Mammary epithelial cell (primary cell): ENCODE measurements at regions of chr1 and their contacts with region 1.

Region 1: GRCh38 chr1:21508580-21509350 is 458 bp upstream of the ALPL start:
- DNase-seq: peak; percentile 21
- H3K4me3 ChIP-seq: peak overlapping the region in 2 of 3 experiments; percentile 18 to 21
- H3K27ac ChIP-seq: no peak overlapping the region
- H3K4me1 ChIP-seq: peaks cover 14% of the 10 kb centered on the region
- H3K27me3 ChIP-seq: peaks cover 13% of the 10 kb centered on the region
- CTCF ChIP-seq: peak; percentile 25 to 56

Region 2: GRCh38 chr1:21534674-21535378 is 26.1 kb after region 1 on chr1:
- CTCF ChIA-PET with region 1: interaction called, 4 read pairs
- dilution Hi-C with region 1: no loop called
- in situ Hi-C with region 1: no loop called
- intact Hi-C with region 1: loop called (anchors 2 kb)
- DNase-seq: peak; percentile 62
- H3K4me3 ChIP-seq: no peak overlapping the region
- H3K27ac ChIP-seq: no peak overlapping the region
- H3K4me1 ChIP-seq: no peaks in the 10 kb centered on the region
- H3K27me3 ChIP-seq: peaks cover 2% of the 10 kb centered on the region
- CTCF ChIP-seq: peak in 1 of 2 donors; percentile 31

Region 3: GRCh38 chr1:21573971-21574465 is 65.3 kb after region 1 on chr1:
- CTCF ChIA-PET with region 1: no interaction called
- dilution Hi-C with region 1: no loop called
- in situ Hi-C with region 1: no loop called
- intact Hi-C with region 1: loop called (anchors 1 kb)
- DNase-seq: peak; percentile 72
- H3K4me3 ChIP-seq: no peak overlapping the region
- H3K27ac ChIP-seq: no peak overlapping the region
- H3K4me1 ChIP-seq: peaks cover 14% of the 10 kb centered on the region
- H3K27me3 ChIP-seq: no peaks in the 10 kb centered on the region
- CTCF ChIP-seq: peak; percentile 55 to 74

Region 4: DNA sequence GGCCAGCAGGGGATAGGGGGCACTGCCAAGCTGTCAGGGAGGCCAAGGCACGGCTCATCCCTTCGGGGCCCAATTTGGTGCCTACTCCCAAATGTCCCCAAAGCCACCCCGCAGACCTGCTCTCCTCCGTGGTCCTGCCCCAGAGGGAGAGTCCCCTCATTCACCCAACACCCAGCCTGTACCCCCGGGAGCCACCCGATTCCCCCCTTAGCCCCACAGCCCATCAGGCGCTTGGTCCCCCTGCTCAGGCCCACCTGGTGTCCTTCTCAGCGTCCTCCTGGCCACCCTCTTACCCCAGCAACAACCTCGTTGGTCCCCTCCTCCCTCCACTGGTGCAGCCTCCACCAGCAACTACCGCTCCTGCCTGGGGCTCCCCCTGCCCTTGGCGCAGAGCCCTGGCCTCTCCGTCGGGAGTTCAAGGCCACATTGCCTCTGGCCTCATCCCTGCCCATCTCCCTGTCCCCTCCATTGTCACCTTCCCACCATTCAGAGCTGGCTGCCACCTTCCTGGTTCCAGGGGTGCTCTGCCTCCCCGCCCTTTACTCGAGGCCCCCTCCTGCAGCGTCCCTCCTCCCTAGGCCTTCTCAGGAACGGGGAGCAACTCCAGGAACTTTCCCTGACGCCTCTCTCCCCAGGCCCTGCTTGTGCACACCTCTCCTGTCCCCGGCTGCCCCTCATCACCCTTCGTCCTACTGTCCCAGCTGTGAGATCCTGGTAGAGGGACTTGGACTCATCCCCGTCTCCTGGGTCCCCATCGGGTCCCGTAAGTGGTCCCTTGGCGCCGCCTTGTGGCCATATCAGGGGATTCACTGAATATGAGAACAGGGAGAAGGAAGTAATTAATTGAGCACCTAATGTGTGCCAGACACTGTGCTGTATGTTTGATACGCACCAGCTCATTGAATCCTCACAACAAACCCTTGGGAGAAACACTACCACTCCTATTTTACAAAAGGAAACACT is 86.5 kb after region 1 on chr1:
- CTCF ChIA-PET with region 1: no interaction called
- dilution Hi-C with region 1: no loop called
- in situ Hi-C with region 1: no loop called
- intact Hi-C with region 1: loop called (anchors 5 kb)
- DNase-seq: peak; percentile 26
- H3K4me3 ChIP-seq: no peak overlapping the region
- H3K27ac ChIP-seq: no peak overlapping the region
- H3K4me1 ChIP-seq: peaks cover 9% of the 10 kb centered on the region
- H3K27me3 ChIP-seq: no peaks in the 10 kb centered on the region
- CTCF ChIP-seq: peak; percentile 81

Region 5: DNA sequence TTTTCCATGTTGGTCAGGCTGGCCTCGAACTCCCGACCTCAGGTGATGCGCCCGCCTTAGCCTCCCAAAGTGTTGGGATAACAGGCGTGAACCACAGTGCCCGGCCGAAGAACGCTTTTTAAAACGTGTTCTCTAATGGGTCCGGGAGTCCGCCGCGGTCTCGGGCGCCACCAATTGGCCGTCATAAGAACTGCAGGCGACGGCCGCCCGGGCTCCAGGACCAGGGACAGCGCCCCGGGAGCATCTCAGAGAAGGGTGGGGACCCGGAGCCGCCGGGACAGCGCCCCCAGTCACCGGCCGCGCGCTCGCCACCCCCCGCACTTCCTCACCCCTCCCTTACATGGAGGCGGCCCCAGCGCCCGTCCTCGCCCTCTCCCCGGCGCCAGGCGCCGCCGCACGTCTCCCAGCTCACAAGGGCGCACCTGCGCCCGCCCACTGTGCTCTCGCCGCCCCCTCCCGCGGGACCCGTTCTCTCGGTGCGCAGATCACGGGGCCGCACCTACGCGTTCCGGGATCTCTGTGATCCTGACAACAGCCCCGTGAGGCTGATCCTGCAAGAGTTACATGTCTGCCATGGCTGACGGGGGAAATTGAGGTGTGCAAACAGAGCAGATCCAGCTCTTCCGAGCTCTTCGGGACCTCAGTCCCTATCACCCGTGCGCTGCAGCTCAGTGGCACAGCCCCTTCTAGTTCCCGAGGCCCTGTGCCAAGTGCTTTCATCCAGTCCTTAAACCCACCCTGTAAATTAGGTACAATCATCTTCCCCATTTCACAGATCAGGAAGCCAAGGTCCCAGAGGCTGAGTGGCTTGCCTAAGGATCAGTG is 150.5 kb after region 1 on chr1:
- CTCF ChIA-PET with region 1: no interaction called
- dilution Hi-C with region 1: no loop called
- in situ Hi-C with region 1: loop called in 1 of 2 experiments (anchors 25 kb)
- intact Hi-C with region 1: loop called (anchors 1 kb)
- DNase-seq: peak; percentile 62
- H3K4me3 ChIP-seq: no peak overlapping the region
- H3K27ac ChIP-seq: no peak overlapping the region
- H3K4me1 ChIP-seq: peaks cover 5% of the 10 kb centered on the region
- H3K27me3 ChIP-seq: no peaks in the 10 kb centered on the region
- CTCF ChIP-seq: peak; percentile 76 to 89

Region 6: GRCh38 chr1:21725748-21726392 is 217.1 kb after region 1 on chr1:
- CTCF ChIA-PET with region 1: no interaction called
- dilution Hi-C with region 1: no loop called
- in situ Hi-C with region 1: no loop called
- intact Hi-C with region 1: no loop called
- DNase-seq: no peak
- H3K4me3 ChIP-seq: no peak overlapping the region
- H3K27ac ChIP-seq: no peak overlapping the region
- H3K4me1 ChIP-seq: no peaks in the 10 kb centered on the region
- H3K27me3 ChIP-seq: no peaks in the 10 kb centered on the region
- CTCF ChIP-seq: no peak